Pancreas (tissue), 10 donors: ENCODE measurements at regions of chr10 and their contacts with region 1.

Region 1: DNA sequence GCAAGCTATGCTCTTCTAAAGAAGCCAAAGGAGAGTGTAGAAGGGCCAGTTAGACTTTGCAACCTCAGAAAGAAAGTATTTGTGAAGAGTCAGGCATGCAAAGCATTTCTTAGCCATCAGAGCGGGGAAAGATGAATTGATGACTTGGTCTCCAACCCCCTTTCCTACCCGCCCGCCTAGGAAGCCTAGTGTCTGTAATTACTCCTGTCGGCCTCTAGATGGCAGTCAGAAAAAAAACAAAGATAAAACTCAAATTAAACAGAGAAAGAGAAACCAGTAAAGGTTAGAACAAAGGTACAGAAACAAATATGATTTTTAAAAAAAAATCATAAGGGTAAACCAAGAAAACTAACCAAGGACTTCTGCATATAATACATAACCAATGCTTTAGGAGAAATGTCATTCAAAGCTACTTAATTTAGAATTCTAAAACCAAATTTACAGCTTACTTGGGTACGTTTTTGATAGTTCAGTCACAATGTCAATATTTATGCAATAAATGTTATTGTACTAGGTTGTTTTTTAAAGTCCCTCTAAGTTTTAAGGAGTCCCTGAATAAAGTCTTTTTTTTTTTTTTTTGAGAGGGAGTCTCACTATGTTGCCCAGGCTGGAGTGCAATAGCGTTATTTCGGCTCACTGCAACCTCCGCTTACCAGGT is 97.6 kb downstream of the LYZL1 start:
- DNase-seq: no peak
- ATAC-seq: peak; percentile 55 to 81 (median 76)
- H3K4me3 ChIP-seq: no peak overlapping the region
- H3K27ac ChIP-seq: no peak overlapping the region
- H3K4me1 ChIP-seq: no peaks in the 10 kb centered on the region
- H3K27me3 ChIP-seq: no peaks in the 10 kb centered on the region
- CTCF ChIP-seq: peak; percentile 58 to 76 (median 68)

Region 2: GRCh38 chr10:29446327-29446726 is 59.9 kb after region 1 on chr10:
- intact Hi-C with region 1: loop called in 1 of 3 experiments (anchors 5 kb)
- DNase-seq: no peak
- ATAC-seq: no peak
- H3K4me3 ChIP-seq: no peak overlapping the region
- H3K27ac ChIP-seq: no peak overlapping the region
- H3K4me1 ChIP-seq: peaks cover 0 to 4% (median 0%) of the 10 kb centered on the region in 3 donors
- H3K27me3 ChIP-seq: no peaks in the 10 kb centered on the region
- CTCF ChIP-seq: no peak